PC-3 (cell line): ENCODE measurements at regions of chr2 and their contacts with region 1.

Region 1: DNA sequence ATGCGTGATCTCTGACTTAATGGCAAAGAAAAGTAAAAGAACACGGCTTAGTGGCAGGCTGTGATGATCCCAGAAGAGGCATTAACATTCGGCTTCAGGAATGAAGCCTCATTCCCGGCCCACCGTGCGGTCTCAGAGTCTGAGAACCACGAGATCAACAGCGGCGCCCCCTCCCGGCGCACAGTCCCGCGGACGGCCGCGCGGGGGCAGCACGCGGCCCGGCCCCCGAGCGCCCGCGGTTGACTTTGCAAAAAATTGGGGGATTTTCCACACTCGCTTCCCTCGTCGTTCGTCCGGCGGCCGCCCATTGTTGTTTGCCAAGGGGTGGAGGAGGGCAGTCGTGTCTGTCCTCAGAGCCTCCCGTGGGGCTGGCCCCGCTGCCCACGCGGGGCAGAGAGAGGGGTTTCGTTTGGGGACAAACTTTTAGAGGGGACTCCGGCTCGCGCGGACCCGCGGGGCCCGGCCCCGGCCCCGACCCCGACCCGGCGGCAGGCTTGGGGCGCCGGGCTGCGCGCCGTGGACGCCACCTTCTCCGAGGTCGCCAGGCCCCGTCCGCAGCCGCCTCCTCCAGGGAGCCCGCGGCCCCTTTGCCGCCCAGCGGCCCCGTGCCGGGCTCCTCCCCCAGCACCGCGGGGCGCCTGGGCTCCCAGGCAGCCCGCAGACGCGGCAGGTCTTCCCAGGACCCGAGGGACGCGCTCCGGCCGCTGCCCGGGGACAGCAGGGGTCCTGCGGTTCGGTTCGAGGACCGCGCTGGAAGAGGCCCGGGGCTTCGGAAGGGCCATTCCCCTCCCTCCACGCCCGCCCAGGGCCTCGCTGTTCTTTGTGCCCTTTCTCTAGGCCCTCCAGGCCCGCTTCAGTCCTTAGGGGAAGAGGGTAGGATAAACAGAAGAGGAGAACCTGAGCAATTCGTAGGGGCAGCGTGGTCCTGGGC is 3.4 kb upstream of the HS6ST1 start:
- DNase-seq: peak; percentile 87
- ATAC-seq: peak; percentile 56
- H3K4me3 ChIP-seq: peak overlapping the region; percentile 70
- H3K27ac ChIP-seq: no peak overlapping the region
- H3K4me1 ChIP-seq: peaks cover 3% of the 10 kb centered on the region; the same call in 1 of the 2 replicates
- H3K27me3 ChIP-seq: no peaks in the 10 kb centered on the region
- CTCF ChIP-seq: peak; percentile 88

Region 2: DNA sequence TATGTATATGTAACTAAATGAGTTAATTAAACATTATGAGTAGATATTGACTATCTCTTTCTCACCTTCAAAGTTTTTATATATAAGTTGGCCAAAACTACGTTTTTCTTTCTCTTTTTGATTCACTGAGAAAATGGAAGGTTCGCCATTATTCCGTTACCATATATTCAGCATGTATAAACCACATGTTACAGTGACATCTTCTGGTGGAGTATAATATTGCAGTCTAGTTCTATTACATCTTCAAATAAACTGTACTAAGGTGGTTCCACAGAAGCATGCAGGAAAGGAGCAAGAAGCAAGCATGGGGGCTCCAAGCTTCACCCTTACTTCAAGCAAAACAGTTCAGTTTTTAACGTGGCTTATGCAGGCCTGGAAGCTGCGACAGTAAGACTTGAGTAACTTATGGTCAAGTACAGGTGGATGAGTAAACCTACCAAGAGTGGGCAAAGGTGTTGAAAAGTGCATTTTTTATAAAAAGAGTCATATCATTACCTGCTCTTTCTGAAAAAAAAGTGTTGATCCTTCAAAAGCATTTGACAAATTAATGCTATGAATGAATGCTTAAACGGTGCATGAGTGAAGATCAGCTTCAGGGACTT is 1527.6 kb after region 1 on chr2:
- CTCF ChIA-PET with region 1: no interaction called
- POLR2A ChIA-PET with region 1: no interaction called
- intact Hi-C with region 1: loop called (anchors 1 kb)
- DNase-seq: peak; percentile 83
- ATAC-seq: peak; percentile 57
- H3K4me3 ChIP-seq: no peak overlapping the region
- H3K27ac ChIP-seq: no peak overlapping the region
- H3K4me1 ChIP-seq: no peaks in the 10 kb centered on the region
- H3K27me3 ChIP-seq: 0 out of 2 replicates have a peak, but pooled peaks cover 5% of the 10 kb centered on the region
- CTCF ChIP-seq: peak; percentile 80